HCT116 (cell line): ENCODE measurements at regions of chr13 and their contacts with region 1.

Region 1: DNA sequence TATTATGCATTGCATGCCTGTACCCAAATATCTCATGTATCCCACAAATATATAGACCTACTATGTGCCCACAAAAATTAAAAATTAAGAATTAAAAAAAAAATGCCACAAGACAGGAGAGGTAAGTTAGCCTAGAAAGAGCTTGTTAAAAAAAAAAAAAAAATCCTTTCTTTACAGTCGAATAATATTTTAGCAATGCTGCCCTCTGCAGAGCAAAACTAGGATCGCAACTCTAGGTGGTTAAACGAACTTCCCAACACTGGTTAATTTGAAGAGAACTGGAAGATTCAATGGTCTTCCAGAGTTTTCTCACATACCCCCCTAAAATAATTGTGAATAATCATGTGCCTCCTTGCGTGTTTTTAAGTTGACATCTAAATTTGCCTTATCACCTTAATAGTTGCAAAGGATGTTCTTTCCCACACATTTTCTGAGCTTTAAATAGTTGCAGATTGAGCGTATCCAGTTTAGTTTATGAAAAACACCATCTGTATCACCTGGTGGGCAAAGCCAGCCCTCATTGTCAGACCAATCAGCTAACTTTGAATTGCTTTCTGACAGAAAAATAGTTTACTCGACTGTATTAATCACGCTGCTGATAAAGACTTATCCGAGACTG is 47.4 kb upstream of the RCBTB2 start:
- DNase-seq: peak; percentile 45
- ATAC-seq: peak; percentile 76
- H3K4me3 ChIP-seq: no peak overlapping the region
- H3K27ac ChIP-seq: no peak overlapping the region
- H3K4me1 ChIP-seq: peaks cover 0 to 2% of the 10 kb centered on the region in 2 experiments; a peak in 2 of 4 replicates
- H3K27me3 ChIP-seq: no peaks in the 10 kb centered on the region
- CTCF ChIP-seq: peak; percentile 63 to 67 (median 66)
- POLR2A ChIP-seq: no peak
- RAD21 ChIP-seq: peak; percentile 74

Region 2: DNA sequence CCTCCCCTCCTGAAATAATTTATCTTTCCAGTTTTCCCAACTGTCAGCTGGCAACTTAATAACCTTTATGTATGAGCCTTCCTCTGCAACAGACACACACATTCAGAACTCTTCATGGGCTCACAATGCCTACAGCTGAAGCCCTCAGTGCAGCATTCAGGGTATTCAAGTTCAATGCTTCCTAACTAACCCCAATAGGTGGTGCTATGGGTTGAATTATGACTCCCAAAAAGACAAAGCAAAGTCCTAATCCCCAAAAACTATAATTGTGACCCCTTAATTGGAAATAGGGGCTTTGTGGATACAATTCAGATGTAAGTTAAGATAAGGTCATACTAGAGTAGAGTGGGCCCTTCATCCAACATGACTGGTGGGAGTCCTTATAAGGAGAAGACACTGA is 781.4 kb before region 1 on chr13:
- CTCF ChIA-PET with region 1: interaction called, 3 read pairs
- POLR2A ChIA-PET with region 1: no interaction called
- RAD21 ChIA-PET with region 1: no interaction called
- intact Hi-C with region 1: loop called (anchors 2 kb)
- DNase-seq: no peak
- ATAC-seq: peak; percentile 74
- H3K4me3 ChIP-seq: no peak overlapping the region
- H3K27ac ChIP-seq: no peak overlapping the region
- H3K4me1 ChIP-seq: no peaks in the 10 kb centered on the region
- H3K27me3 ChIP-seq: no peaks in the 10 kb centered on the region
- CTCF ChIP-seq: peak; percentile 22 to 43 (median 35); a peak in 3 of 6 replicates
- POLR2A ChIP-seq: no peak
- RAD21 ChIP-seq: peak; percentile 40

Region 3: GRCh38 chr13:48037346-48038173 is 542.7 kb before region 1 on chr13 and contains the start of gene NUDT15:
- CTCF ChIA-PET with region 1: interaction called, 12 read pairs
- POLR2A ChIA-PET with region 1: no interaction called
- RAD21 ChIA-PET with region 1: no interaction called
- intact Hi-C with region 1: no loop called
- DNase-seq: peak; percentile 95
- ATAC-seq: peak; percentile 93
- H3K4me3 ChIP-seq: peak within 1 kb of the TSS; percentile 69 to 71
- H3K27ac ChIP-seq: peak within 1 kb of the TSS; percentile 93
- H3K4me1 ChIP-seq: peaks cover 15 to 28% of the 10 kb centered on the region in 2 experiments
- H3K27me3 ChIP-seq: no peaks in the 10 kb centered on the region
- CTCF ChIP-seq: peak; percentile 93 to 99 (median 99)
- POLR2A ChIP-seq: peak; percentile 65
- RAD21 ChIP-seq: peak; percentile 46; the same call in 1 of the 2 replicates
- total RNA-seq, gene NUDT15: 38.6 TPM

Region 4: DNA sequence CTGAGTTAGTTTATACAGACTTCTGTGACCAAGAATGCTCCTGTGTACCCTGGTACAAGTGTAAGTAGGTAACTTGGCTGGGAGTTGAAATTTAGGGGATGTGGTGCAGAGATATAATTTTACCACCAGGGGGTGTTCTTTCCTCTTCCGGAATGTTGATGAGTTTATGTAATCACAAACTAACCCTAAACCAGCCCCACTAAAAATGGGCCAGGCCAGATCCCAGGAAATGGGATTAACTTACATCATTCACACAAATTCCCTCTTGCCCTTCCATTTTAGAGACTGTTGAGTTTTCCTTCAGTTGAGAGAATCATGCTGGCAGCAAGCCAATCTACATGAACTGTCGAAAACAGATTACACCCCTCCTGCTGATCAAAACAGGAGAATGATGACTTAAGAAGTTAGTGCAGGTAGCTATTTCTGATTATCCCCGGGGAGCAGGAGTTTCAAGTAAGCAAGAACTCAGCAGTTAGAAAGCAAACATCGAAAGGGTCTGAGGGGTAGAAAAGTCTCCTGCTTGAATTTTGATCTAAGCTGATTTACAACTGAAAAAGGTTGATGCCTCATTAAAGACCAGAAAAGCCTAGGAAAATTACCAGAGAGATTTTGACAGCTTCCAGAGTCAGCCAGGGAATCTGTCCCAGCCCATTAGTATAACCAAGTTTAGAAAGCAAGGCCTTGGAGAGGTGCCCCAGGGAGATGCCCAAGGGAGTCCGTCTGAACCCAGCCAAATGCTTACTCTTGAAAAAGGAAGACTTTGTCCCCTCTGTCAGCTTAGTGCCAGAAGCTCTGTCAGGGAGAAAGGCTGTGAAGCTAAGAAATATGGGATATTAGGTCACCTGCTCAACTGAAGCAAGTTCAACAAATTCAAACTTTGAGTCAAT is 453.1 kb before region 1 on chr13:
- CTCF ChIA-PET with region 1: interaction called, 42 read pairs
- POLR2A ChIA-PET with region 1: interaction called, 4 read pairs
- RAD21 ChIA-PET with region 1: interaction called, 3 to 5 read pairs
- intact Hi-C with region 1: loop called (anchors 1 kb)
- DNase-seq: peak; percentile 59
- ATAC-seq: peak; percentile 87
- H3K4me3 ChIP-seq: no peak overlapping the region
- H3K27ac ChIP-seq: no peak overlapping the region
- H3K4me1 ChIP-seq: 0 out of 4 replicates have a peak, but pooled peaks cover 0 to 5% of the 10 kb centered on the region in 2 experiments
- H3K27me3 ChIP-seq: no peaks in the 10 kb centered on the region
- CTCF ChIP-seq: peak; percentile 70 to 82 (median 72)
- POLR2A ChIP-seq: no peak
- RAD21 ChIP-seq: peak; percentile 78

Region 5: GRCh38 chr13:48334534-48335127 is 245.7 kb before region 1 on chr13:
- CTCF ChIA-PET with region 1: interaction called, 65 read pairs
- POLR2A ChIA-PET with region 1: no interaction called
- RAD21 ChIA-PET with region 1: interaction called, 7 to 16 read pairs
- intact Hi-C with region 1: loop called (anchors 1 kb)
- DNase-seq: peak; percentile 19
- ATAC-seq: peak; percentile 67
- H3K4me3 ChIP-seq: no peak overlapping the region
- H3K27ac ChIP-seq: no peak overlapping the region
- H3K4me1 ChIP-seq: no peaks in the 10 kb centered on the region
- H3K27me3 ChIP-seq: no peaks in the 10 kb centered on the region
- CTCF ChIP-seq: peak; percentile 37 to 72 (median 42); a peak in 5 of 6 replicates
- POLR2A ChIP-seq: no peak
- RAD21 ChIP-seq: peak; percentile 69

Region 6: DNA sequence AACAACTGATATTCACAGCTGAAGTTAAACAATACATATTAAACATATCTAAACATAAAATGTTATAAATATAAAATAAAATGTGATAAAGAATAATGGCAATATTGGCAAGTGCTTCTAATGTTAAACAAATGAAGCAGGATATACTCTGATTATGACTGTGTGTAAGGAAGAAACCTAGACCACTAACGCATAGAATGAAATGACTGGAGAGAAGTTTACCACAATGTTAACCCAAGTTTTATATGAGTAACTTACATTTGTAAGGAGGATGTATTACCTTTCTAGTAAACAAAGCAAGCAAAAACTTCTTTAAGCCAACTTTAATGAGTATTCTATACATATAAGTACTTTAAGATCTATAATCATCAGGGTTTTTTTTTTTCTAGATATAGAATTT is 233.7 kb before region 1 on chr13:
- CTCF ChIA-PET with region 1: no interaction called
- POLR2A ChIA-PET with region 1: no interaction called
- RAD21 ChIA-PET with region 1: no interaction called
- intact Hi-C with region 1: loop called (anchors 5 kb)
- DNase-seq: no peak
- ATAC-seq: no peak
- H3K4me3 ChIP-seq: no peak overlapping the region
- H3K27ac ChIP-seq: no peak overlapping the region
- H3K4me1 ChIP-seq: no peaks in the 10 kb centered on the region
- H3K27me3 ChIP-seq: no peaks in the 10 kb centered on the region
- CTCF ChIP-seq: no peak
- POLR2A ChIP-seq: no peak
- RAD21 ChIP-seq: no peak

Region 7: GRCh38 chr13:48749699-48750473 is 169.6 kb after region 1 on chr13:
- CTCF ChIA-PET with region 1: no interaction called
- POLR2A ChIA-PET with region 1: no interaction called
- RAD21 ChIA-PET with region 1: no interaction called
- intact Hi-C with region 1: no loop called
- DNase-seq: peak; percentile 96
- ATAC-seq: peak; percentile 97
- H3K4me3 ChIP-seq: 0 out of 4 replicates have a peak overlapping the region, but pooled peaks of 1 of the 2 experiments have one; percentile 9
- H3K27ac ChIP-seq: peak overlapping the region; percentile 29; the same call in 1 of the 2 replicates
- H3K4me1 ChIP-seq: peaks cover 12 to 27% of the 10 kb centered on the region in 2 experiments
- H3K27me3 ChIP-seq: no peaks in the 10 kb centered on the region
- CTCF ChIP-seq: peak; percentile 48 to 64 (median 52); a peak in 5 of 6 replicates
- POLR2A ChIP-seq: no peak
- RAD21 ChIP-seq: peak; percentile 47

Region 8: GRCh38 chr13:48994706-48995105 is 414.4 kb after region 1 on chr13:
- CTCF ChIA-PET with region 1: no interaction called
- POLR2A ChIA-PET with region 1: no interaction called
- RAD21 ChIA-PET with region 1: no interaction called
- intact Hi-C with region 1: no loop called
- DNase-seq: no peak
- ATAC-seq: no peak
- H3K4me3 ChIP-seq: no peak overlapping the region
- H3K27ac ChIP-seq: no peak overlapping the region
- H3K4me1 ChIP-seq: no peaks in the 10 kb centered on the region
- H3K27me3 ChIP-seq: no peaks in the 10 kb centered on the region
- CTCF ChIP-seq: no peak
- POLR2A ChIP-seq: no peak
- RAD21 ChIP-seq: no peak